ENCODE measurements at regions of chr6 and their contacts with region 1.

Region 1: DNA sequence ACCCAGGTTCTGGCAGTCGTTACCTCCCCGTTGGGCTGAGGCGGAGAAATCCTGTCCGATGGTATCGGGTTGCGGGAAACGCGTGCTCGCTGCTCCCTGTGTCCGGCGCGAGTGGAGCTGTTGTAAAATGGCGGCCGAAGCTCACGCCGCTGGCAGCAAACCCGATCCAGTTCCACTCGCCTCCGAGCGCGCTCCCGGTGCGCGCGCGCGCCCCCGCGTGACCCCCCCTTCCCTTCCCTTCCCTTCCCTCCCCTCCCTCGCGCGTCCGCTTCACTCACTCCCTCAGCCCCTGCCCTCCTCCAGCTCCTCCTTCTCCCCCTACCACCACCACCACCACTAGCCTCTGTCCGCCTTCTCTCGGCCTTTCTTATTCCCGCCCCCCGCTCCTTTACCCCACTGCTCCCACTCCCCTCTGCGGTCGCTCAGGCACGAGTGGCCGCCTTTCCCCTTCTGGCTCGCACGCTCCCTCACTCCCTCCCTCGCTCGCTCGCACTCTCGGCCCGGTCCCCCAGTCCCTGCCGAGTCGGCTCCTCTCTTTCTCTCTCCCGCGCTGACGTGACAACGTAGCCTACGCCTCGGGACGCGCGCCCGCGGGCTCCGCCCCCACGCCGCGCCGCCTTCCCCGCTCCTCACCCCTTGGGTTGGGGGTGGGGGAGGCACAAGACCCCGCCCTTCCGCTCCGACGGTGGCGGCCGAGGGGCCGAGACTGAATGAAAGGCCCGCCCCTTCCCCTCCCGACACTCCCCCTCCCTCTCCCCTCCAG is at the start of gene SYNCRIP:
- DNase-seq: peak; percentile 99
- H3K4me3 ChIP-seq: peak within 1 kb of the TSS; percentile 92 to 99 (median 99)
- H3K27ac ChIP-seq: peak within 1 kb of the TSS; percentile 99
- H3K4me1 ChIP-seq: peaks cover 23% of the 10 kb centered on the region
- H3K27me3 ChIP-seq: no peaks in the 10 kb centered on the region
- CTCF ChIP-seq: no peak
- total RNA-seq, gene SYNCRIP: 47.8 to 132 TPM

Region 2: GRCh38 chr6:85460921-85461797 is 181.8 kb before region 1 on chr6:
- CTCF ChIA-PET with region 1: no interaction called
- dilution Hi-C with region 1: no loop called
- in situ Hi-C with region 1: no loop called
- intact Hi-C with region 1: loop called (anchors 5 kb)
- DNase-seq: peak; percentile 86
- H3K4me3 ChIP-seq: no peak overlapping the region
- H3K27ac ChIP-seq: peak overlapping the region; percentile 61
- H3K4me1 ChIP-seq: peaks cover 100% of the 10 kb centered on the region
- H3K27me3 ChIP-seq: no peaks in the 10 kb centered on the region
- CTCF ChIP-seq: no peak

Region 3: DNA sequence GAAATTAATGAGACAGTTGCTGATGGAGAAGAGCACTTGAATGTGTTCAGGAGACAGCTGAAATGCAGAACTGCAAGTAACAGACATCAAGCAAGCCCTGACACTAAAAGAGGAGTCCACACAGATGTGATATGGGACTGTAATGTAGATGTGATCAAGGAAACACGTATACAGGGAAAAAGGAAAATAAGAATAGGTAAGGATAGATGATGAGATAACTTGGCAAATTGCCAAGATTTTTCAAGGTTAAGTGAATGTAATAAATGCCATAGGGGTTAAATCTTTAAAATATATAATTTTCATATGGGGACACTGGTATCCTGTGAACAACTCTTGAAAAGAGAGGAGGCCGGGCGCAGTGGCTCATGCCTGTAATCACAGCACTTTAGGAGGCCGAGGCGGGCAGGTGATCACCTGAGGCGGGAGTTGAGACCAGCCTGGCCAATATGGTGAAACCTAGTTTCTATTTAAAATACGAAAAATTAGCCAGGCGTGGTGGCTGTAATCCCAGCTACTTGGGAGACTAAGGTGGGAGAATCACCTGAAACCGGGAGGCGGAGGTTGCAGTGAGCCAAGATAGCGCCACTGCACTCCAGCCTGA is 42.1 kb before region 1 on chr6:
- CTCF ChIA-PET with region 1: no interaction called
- dilution Hi-C with region 1: loop called (anchors 5 kb)
- in situ Hi-C with region 1: no loop called
- intact Hi-C with region 1: no loop called
- DNase-seq: no peak
- H3K4me3 ChIP-seq: no peak overlapping the region
- H3K27ac ChIP-seq: no peak overlapping the region
- H3K4me1 ChIP-seq: no peaks in the 10 kb centered on the region
- H3K27me3 ChIP-seq: no peaks in the 10 kb centered on the region
- CTCF ChIP-seq: no peak

Region 4: DNA sequence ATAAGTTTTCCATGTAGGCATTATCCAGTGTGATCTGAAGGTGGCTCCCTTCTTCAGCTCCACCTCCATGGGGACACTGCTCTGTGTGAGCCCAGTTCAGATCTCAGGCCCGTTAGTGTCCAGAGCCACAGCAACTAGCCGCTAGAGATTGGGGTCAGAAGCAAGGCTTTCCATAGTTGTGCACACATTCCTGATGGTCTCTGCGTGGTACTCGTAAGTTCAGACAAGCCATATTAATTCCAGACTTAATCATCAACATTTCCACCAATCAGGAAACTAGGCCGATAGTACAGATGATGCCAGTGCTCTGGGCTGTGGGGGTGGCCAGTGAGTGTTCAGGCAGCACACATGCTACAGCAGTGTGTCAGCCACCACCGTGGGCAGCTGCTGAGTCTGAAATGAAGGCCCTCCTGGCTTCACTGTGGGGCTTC is 17.2 kb after region 1 on chr6:
- CTCF ChIA-PET with region 1: no interaction called
- dilution Hi-C with region 1: no loop called
- in situ Hi-C with region 1: no loop called
- intact Hi-C with region 1: loop called (anchors 2 kb)
- DNase-seq: peak; percentile 91
- H3K4me3 ChIP-seq: no peak overlapping the region
- H3K27ac ChIP-seq: peak overlapping the region; percentile 70
- H3K4me1 ChIP-seq: peaks cover 10% of the 10 kb centered on the region
- H3K27me3 ChIP-seq: no peaks in the 10 kb centered on the region
- CTCF ChIP-seq: peak; percentile 7 to 35